HEK293 (cell line): ENCODE measurements at regions of chr6 and their contacts with region 1.

Region 1: DNA sequence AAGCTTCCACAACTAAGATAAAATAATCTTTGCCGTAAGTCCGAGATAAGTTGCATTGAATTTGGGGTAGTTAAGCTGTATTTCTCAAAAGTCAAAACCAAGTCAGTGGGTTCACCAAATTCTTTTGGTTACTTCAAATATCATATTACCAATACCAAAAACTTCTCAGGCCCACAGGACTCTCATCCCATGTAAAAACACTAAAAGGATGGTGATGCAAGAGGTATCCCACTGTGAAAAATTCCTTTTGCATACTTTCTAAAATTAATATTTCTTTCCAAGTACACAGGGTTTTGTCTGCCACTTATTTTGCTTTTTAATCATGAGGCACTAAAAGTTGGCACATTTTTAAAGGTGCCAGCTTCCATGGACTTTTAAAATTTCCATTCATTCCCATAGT is 151.3 kb downstream of the GJA10 start:
- H3K4me3 ChIP-seq: no peak overlapping the region
- H3K27ac ChIP-seq: no peak overlapping the region
- H3K4me1 ChIP-seq: no peaks in the 10 kb centered on the region
- CTCF ChIP-seq: no peak

Region 2: GRCh38 chr6:90028995-90029635 is 16.4 kb before region 1 on chr6:
- CTCF ChIA-PET with region 1: no interaction called
- POLR2A ChIA-PET with region 1: no interaction called
- H3K4me3 ChIP-seq: no peak overlapping the region
- H3K27ac ChIP-seq: no peak overlapping the region
- H3K4me1 ChIP-seq: peaks cover 12% of the 10 kb centered on the region
- CTCF ChIP-seq: no peak

Region 3: GRCh38 chr6:90062051-90062450 is 16.5 kb after region 1 on chr6:
- CTCF ChIA-PET with region 1: interaction called, 10 read pairs
- POLR2A ChIA-PET with region 1: no interaction called
- H3K4me3 ChIP-seq: no peak overlapping the region
- H3K27ac ChIP-seq: no peak overlapping the region
- H3K4me1 ChIP-seq: 0 out of 2 replicates have a peak, but pooled peaks cover 3% of the 10 kb centered on the region
- CTCF ChIP-seq: no peak

Region 4: DNA sequence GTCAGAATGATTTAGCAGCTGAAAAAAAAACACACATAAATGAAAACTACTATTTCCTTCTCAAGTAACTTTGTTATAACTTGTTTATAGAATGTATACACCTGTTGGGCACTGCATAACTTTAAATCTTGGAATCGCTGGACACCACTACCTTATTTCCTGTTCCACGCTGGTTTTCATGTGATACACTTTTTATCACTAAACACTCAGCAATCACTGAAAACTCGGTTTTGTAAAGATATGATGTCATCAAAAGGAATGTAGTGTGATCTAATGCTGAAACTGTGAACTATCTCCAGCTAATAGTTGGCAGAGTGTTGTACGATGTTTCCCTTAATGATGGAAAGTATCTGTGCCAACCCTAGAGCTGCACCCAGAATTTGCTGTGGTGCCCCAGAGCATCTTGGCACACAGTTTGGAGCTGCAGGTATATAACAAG is 123.2 kb after region 1 on chr6:
- CTCF ChIA-PET with region 1: no interaction called
- POLR2A ChIA-PET with region 1: no interaction called
- H3K4me3 ChIP-seq: no peak overlapping the region
- H3K27ac ChIP-seq: no peak overlapping the region
- H3K4me1 ChIP-seq: peaks cover 8% of the 10 kb centered on the region; the same call in 1 of the 2 replicates
- CTCF ChIP-seq: no peak